ENCODE measurements at regions of chr1 and their contacts with region 1.

Region 1: DNA sequence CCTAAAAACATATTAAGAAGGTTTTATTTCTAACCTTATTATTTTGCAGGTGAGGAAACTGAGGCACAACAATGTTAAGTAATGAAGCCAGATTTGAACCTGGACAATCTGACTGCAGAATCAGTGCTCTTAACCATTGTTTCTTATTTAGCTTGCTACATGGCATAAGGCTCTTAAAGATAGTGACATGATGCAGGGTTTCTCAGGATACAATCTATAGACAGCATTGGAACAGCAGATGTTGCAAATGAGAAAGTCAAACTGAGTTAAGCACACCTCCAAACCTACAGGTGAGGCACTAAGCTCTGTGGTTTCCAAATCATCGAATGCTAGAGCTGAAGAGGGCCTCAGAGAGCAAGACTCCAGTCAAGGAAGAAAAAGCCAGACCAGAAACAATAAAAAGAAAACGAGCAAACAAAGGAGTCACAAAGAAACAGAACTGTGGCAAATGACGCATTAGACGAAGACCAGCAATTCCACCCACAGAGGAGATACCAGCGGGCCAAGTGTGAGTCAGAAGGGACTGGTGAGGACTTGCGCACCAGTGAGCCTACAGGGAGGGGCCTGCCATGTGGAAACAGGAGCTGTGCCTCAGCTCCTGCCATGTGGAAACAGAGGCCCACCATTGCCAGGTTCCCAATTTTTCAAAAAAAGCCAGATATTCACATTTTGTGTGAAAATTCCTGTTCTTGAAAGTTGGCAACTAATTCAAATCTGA is 14.4 kb downstream of the CD58 start:
- DNase-seq: peak; percentile 96
- ATAC-seq: peak; percentile 70
- H3K4me3 ChIP-seq: 0 out of 2 replicates have a peak overlapping the region, but pooled peaks have one; percentile 9
- H3K27ac ChIP-seq: peak overlapping the region; percentile 100
- H3K4me1 ChIP-seq: peaks cover 69% of the 10 kb centered on the region
- H3K27me3 ChIP-seq: no peaks in the 10 kb centered on the region
- CTCF ChIP-seq: no peak; a peak in 1 of 6 replicates
- EP300 ChIP-seq: peak; percentile 80 to 96
- POLR2A ChIP-seq: peak; percentile 64
- RAD21 ChIP-seq: peak; percentile 37; the same call in 1 of the 2 replicates

Region 2: GRCh38 chr1:115854005-115854404 is 702.4 kb before region 1 on chr1:
- CTCF ChIA-PET with region 1: no interaction called
- POLR2A ChIA-PET with region 1: no interaction called
- RAD21 ChIA-PET with region 1: no interaction called
- SMC1A ChIA-PET with region 1: no interaction called
- in situ Hi-C with region 1: no loop called
- intact Hi-C with region 1: no loop called
- DNase-seq: no peak
- ATAC-seq: no peak
- H3K4me3 ChIP-seq: no peak overlapping the region
- H3K27ac ChIP-seq: no peak overlapping the region
- H3K4me1 ChIP-seq: no peaks in the 10 kb centered on the region
- H3K27me3 ChIP-seq: no peaks in the 10 kb centered on the region; a peak in 1 of 4 replicates
- CTCF ChIP-seq: no peak
- EP300 ChIP-seq: no peak
- POLR2A ChIP-seq: no peak
- RAD21 ChIP-seq: no peak

Region 3: GRCh38 chr1:116164604-116165368 is 391.7 kb before region 1 on chr1:
- CTCF ChIA-PET with region 1: no interaction called
- POLR2A ChIA-PET with region 1: no interaction called
- RAD21 ChIA-PET with region 1: no interaction called
- SMC1A ChIA-PET with region 1: no interaction called
- in situ Hi-C with region 1: no loop called
- intact Hi-C with region 1: no loop called
- DNase-seq: no peak
- ATAC-seq: no peak
- H3K4me3 ChIP-seq: no peak overlapping the region
- H3K27ac ChIP-seq: no peak overlapping the region
- H3K4me1 ChIP-seq: no peaks in the 10 kb centered on the region
- H3K27me3 ChIP-seq: no peaks in the 10 kb centered on the region
- CTCF ChIP-seq: no peak
- EP300 ChIP-seq: no peak
- POLR2A ChIP-seq: no peak
- RAD21 ChIP-seq: no peak

Region 4: GRCh38 chr1:116498789-116499628 is 57.4 kb before region 1 on chr1:
- CTCF ChIA-PET with region 1: interaction called, 5 read pairs
- POLR2A ChIA-PET with region 1: interaction called, 20 read pairs
- RAD21 ChIA-PET with region 1: interaction called, 35 read pairs
- SMC1A ChIA-PET with region 1: interaction called, 14 read pairs
- in situ Hi-C with region 1: no loop called
- intact Hi-C with region 1: no loop called
- DNase-seq: no peak
- ATAC-seq: peak; percentile 85
- H3K4me3 ChIP-seq: no peak overlapping the region
- H3K27ac ChIP-seq: no peak overlapping the region
- H3K4me1 ChIP-seq: peaks cover 11% of the 10 kb centered on the region
- H3K27me3 ChIP-seq: no peaks in the 10 kb centered on the region
- CTCF ChIP-seq: peak; percentile 79 to 86 (median 79); a peak in 5 of 6 replicates
- EP300 ChIP-seq: no peak
- POLR2A ChIP-seq: no peak
- RAD21 ChIP-seq: peak; percentile 92

Region 5: DNA sequence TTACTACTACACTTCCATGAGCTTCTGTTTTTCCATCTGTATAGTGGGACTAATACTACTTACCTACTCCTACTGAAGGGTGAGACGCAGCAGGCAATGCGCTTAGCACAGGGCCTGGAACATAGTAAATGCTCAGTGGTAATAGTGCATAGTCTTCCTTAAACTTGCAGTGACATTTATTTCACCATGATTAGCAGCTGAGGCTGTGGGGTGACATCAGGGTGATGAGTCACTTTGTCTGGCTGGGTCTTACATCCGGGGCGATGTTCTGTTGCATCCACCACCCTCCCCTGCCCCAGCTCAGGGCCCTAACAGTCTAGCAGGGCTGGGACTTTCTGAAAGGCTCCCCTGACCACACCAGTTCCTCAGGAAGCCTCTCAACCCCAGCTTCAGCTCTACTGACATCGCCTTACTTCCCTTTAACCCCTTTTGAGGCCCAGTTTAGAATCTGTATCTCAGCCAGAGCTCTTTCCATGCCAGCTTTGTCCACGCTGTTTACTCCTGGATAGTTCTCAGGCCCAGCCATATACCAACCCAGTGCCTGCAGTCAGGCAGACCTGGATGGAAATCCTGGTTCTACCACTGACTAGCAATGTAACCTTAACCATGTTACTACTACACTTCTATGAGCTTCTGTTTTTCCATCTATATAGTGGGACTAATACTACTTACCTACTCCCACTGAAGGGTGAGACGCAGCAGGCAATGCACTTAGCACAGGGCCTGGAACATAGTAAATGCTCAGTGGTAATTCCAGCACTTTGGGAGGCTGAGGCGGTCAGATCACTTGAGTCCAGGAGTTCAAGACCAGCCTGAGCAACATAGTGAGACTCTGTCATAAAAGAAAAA is 51.9 kb before region 1 on chr1:
- CTCF ChIA-PET with region 1: interaction called, 5 read pairs
- POLR2A ChIA-PET with region 1: interaction called, 20 read pairs
- RAD21 ChIA-PET with region 1: interaction called, 35 read pairs
- SMC1A ChIA-PET with region 1: interaction called, 14 read pairs
- in situ Hi-C with region 1: no loop called
- intact Hi-C with region 1: no loop called
- DNase-seq: peak; percentile 91
- ATAC-seq: peak; percentile 90
- H3K4me3 ChIP-seq: no peak overlapping the region
- H3K27ac ChIP-seq: peak overlapping the region; percentile 84
- H3K4me1 ChIP-seq: peaks cover 54% of the 10 kb centered on the region
- H3K27me3 ChIP-seq: no peaks in the 10 kb centered on the region
- CTCF ChIP-seq: no peak
- EP300 ChIP-seq: peak; percentile 43 to 69; a peak in 1 of 4 replicates
- POLR2A ChIP-seq: no peak
- RAD21 ChIP-seq: 0 out of 2 replicates have a peak, but pooled peaks have one; percentile 19

Region 6: GRCh38 chr1:116514708-116515525 is 41.5 kb before region 1 on chr1:
- CTCF ChIA-PET with region 1: interaction called, 10 read pairs
- POLR2A ChIA-PET with region 1: interaction called, 10 read pairs
- RAD21 ChIA-PET with region 1: interaction called, 12 read pairs
- SMC1A ChIA-PET with region 1: interaction called, 25 read pairs
- in situ Hi-C with region 1: no loop called
- intact Hi-C with region 1: loop called (anchors 2 kb)
- DNase-seq: peak; percentile 88
- ATAC-seq: peak; percentile 88
- H3K4me3 ChIP-seq: no peak overlapping the region
- H3K27ac ChIP-seq: peak overlapping the region; percentile 85
- H3K4me1 ChIP-seq: peaks cover 52% of the 10 kb centered on the region
- H3K27me3 ChIP-seq: no peaks in the 10 kb centered on the region
- CTCF ChIP-seq: no peak
- EP300 ChIP-seq: peak in 1 of 2 experiments; percentile 57; a peak in 3 of 4 replicates
- POLR2A ChIP-seq: no peak
- RAD21 ChIP-seq: no peak; the same call in 1 of the 2 replicates

Region 7: DNA sequence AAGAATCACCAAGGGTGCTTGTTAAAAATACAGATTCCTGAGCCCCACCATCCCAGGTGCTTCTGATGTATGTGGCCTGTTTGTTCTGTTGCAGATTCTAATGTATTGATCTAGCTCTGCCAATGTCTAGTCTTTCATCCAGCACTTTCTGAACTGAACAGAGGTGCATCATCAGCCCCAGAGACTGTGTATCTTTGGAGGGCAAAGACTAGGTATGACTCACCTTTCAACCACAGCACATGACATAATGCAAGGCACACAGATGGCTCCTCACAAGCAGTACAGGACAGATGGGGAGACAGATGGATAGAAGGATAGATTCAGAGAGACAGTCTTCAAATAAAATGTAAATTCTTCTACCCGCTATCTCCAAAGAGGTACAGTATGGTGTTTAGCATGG is 17.9 kb before region 1 on chr1:
- CTCF ChIA-PET with region 1: interaction called, 22 read pairs
- POLR2A ChIA-PET with region 1: interaction called, 33 read pairs
- RAD21 ChIA-PET with region 1: interaction called, 23 read pairs
- SMC1A ChIA-PET with region 1: interaction called, 128 read pairs
- in situ Hi-C with region 1: no loop called
- intact Hi-C with region 1: loop called (anchors 2 kb)
- DNase-seq: no peak
- ATAC-seq: peak; percentile 89
- H3K4me3 ChIP-seq: no peak overlapping the region
- H3K27ac ChIP-seq: peak overlapping the region; percentile 66
- H3K4me1 ChIP-seq: peaks cover 51% of the 10 kb centered on the region
- H3K27me3 ChIP-seq: no peaks in the 10 kb centered on the region
- CTCF ChIP-seq: no peak
- EP300 ChIP-seq: peak in 1 of 2 experiments; percentile 34; a peak in 1 of 4 replicates
- POLR2A ChIP-seq: no peak
- RAD21 ChIP-seq: no peak

Region 8: DNA sequence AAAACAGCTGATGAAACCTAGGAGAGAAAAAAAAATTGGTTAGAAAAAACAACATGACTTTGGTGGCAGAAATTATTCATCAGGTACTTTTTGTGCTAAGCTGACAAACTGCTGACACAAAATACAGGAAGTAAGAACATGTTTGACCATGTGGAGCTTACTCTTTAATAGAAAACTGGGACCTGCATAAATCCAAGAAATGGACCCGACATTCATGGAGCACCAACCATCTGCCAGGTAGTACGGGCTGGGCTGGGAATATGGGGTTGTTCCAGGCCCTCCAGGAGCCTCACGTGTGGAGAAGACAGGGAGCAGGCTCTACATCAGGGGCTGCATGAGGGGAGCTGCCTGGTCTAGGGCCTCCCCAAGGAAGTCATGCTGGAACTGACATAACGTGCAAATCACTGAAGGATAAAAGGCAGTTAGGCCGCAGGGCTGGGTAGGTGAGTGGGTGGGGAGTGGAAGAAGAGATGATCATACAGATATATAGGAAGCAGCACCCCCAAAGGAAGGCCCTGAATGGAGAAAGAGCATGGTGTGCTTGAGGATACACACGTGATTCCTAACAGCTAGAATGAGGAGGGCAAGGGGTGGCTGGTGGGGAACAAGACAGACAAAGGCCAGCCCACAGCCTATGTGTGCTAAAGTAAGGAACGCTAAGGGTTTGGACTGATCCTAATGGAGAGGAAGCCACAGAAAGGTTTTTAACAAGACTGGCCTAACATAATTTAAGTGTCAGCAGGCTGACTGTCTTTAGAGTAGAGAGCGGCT is 11.7 kb before region 1 on chr1:
- CTCF ChIA-PET with region 1: interaction called, 22 read pairs
- POLR2A ChIA-PET with region 1: interaction called, 33 read pairs
- RAD21 ChIA-PET with region 1: interaction called, 23 read pairs
- SMC1A ChIA-PET with region 1: interaction called, 128 read pairs
- in situ Hi-C with region 1: no loop called
- intact Hi-C with region 1: loop called (anchors 1 kb)
- DNase-seq: no peak
- ATAC-seq: peak; percentile 64
- H3K4me3 ChIP-seq: peak overlapping the region; percentile 34
- H3K27ac ChIP-seq: peak overlapping the region; percentile 98
- H3K4me1 ChIP-seq: peaks cover 70% of the 10 kb centered on the region
- H3K27me3 ChIP-seq: no peaks in the 10 kb centered on the region
- CTCF ChIP-seq: no peak
- EP300 ChIP-seq: peak; percentile 73 to 83; a peak in 3 of 4 replicates
- POLR2A ChIP-seq: peak; percentile 50; the same call in 1 of the 2 replicates
- RAD21 ChIP-seq: no peak

Region 9: DNA sequence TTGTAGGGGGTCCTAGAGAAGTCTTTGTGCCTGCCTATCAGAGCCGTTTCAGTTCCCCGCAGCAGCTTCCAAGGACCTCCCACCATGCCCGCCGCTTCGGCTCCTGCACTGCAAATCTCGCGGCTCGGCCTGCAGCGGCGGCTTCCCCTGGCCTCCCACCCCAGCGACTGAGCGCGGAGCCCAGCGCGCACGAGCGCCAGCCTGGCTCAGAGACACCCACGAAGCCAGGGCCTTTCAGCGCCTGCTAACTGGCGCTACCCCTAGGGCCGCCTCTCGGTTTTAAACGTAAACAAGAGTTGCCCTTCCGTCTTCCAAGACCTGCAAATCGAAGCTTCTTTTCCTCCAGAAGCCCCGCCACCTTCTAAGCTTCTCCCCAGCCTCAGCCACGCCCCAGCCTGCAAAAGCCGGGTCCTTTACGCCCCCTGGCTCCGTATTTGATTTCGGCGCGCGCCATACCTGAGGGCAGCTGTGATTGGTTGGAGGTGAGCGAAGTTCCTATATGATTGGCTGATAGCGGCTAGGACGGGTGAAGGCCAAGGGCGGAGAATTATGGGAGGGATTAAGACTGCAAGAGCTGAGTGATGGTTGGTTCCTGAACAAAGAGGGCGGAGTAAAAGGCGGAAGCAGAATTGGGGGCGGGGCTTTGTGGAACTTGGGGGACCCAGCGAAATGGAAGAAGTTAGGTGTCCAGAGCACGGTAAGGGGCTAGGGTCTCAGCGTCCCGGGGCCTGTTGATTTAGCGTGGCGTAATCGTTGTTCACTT is 503.4 kb after region 1 on chr1 and contains the start of gene TTF2:
- CTCF ChIA-PET with region 1: interaction called, 3 read pairs
- POLR2A ChIA-PET with region 1: interaction called, 4 read pairs
- RAD21 ChIA-PET with region 1: interaction called, 6 read pairs
- SMC1A ChIA-PET with region 1: interaction called, 3 read pairs
- in situ Hi-C with region 1: no loop called
- intact Hi-C with region 1: loop called (anchors 5 kb)
- DNase-seq: peak; percentile 99
- ATAC-seq: peak; percentile 86
- H3K4me3 ChIP-seq: peak within 1 kb of the TSS; percentile 84
- H3K27ac ChIP-seq: peak within 1 kb of the TSS; percentile 90
- H3K4me1 ChIP-seq: peaks cover 4% of the 10 kb centered on the region
- H3K27me3 ChIP-seq: no peaks in the 10 kb centered on the region
- CTCF ChIP-seq: peak in 1 of 3 experiments; percentile 26; a peak in 1 of 6 replicates
- EP300 ChIP-seq: peak in 1 of 2 experiments; percentile 40; a peak in 1 of 4 replicates
- POLR2A ChIP-seq: peak; percentile 85
- RAD21 ChIP-seq: no peak
- polyA plus RNA-seq, gene TTF2: 17.7 to 20.8 TPM

Measured in GM12878 (cell line).